ENCODE measurements at regions of chr3 and their contacts with region 1.

Region 1: DNA sequence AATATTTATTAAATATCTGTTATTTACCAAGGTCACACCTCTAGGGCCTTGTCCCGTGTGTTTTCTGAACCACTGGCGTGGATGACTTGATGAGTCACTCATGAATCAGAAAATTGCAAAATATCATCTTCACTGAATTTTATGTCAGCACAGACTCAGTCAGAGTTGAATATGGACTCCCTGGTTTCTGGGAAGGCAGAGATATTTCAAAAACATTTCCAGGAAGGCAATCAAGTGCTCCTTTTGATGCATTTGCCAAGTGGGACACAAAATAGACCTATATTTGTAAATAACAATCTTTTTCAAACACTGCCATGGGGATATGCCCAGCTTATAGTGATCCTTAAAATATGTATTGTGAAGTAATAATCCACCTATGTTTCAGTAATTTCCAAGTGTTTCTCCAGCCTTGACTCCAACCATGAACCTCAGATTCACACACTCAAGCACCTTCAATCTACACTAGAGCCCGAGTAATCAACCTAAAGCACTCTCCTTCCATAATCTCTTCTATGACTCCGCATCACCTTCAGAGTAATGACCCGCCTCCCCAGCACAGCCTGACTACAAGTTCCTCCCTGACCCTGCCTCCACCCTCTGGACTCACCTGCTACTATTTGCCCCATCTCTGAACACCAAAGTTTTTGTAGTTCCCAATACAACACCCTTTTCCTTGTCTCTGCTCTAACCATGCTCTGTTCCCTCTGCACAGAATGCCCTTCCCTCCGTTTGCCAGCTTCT is 24.3 kb downstream of the DPH3 start:
- DNase-seq: no peak
- H3K4me3 ChIP-seq: no peak overlapping the region
- H3K27ac ChIP-seq: peak overlapping the region; percentile 10 to 16
- H3K4me1 ChIP-seq: peaks cover 0 to 18% (median 6%) of the 10 kb centered on the region in 4 donors
- H3K27me3 ChIP-seq: no peaks in the 10 kb centered on the region
- CTCF ChIP-seq: no peak

Region 2: DNA sequence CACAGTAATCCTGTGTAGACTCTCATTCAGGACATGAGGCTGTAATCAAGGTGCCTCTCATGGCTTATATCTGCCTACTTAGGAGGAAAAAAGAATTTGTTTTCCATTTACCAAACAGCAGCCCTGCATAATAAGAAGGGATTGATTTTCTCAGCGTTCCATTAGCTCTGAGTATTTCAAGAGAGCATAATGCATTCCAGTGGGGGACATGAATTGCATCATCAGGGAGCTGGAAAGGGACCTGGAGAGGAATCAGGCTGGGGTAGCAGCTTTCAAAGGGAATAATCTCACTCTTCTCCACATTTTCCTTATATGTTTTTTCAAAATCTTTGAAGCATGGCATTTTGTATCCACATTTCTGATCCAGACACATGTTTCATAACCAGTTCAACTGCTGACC is 292.1 kb before region 1 on chr3:
- intact Hi-C with region 1: no loop called
- DNase-seq: no peak
- H3K4me3 ChIP-seq: no peak overlapping the region
- H3K27ac ChIP-seq: no peak overlapping the region
- H3K4me1 ChIP-seq: no peaks in the 10 kb centered on the region
- H3K27me3 ChIP-seq: no peaks in the 10 kb centered on the region
- CTCF ChIP-seq: no peak

Region 3: GRCh38 chr3:16048435-16049318 is 191.8 kb before region 1 on chr3:
- intact Hi-C with region 1: loop called (anchors 5 kb)
- DNase-seq: no peak
- H3K4me3 ChIP-seq: no peak overlapping the region
- H3K27ac ChIP-seq: no peak overlapping the region
- H3K4me1 ChIP-seq: peaks cover 0 to 21% (median 0%) of the 10 kb centered on the region in 4 donors
- H3K27me3 ChIP-seq: no peaks in the 10 kb centered on the region
- CTCF ChIP-seq: peak; percentile 78 to 92

Measured in tibial artery (tissue), 4 donors.